ENCODE measurements at regions of chrX and their contacts with region 1.

Region 1: GRCh38 chrX:68196939-68197791 is 236.1 kb downstream of the OPHN1 start:
- DNase-seq: peak in 1 of 5 donors; percentile 7
- ATAC-seq: peak in 3 of 4 donors; percentile 39 to 64 (median 63)
- H3K4me3 ChIP-seq: no peak overlapping the region
- H3K27ac ChIP-seq: no peak overlapping the region
- H3K4me1 ChIP-seq: no peaks in the 10 kb centered on the region
- H3K27me3 ChIP-seq: peaks cover 0 to 7% (median 0%) of the 10 kb centered on the region in 9 donors
- CTCF ChIP-seq: peak; percentile 50 to 70 (median 64)
- POLR2A ChIP-seq: no peak

Region 2: DNA sequence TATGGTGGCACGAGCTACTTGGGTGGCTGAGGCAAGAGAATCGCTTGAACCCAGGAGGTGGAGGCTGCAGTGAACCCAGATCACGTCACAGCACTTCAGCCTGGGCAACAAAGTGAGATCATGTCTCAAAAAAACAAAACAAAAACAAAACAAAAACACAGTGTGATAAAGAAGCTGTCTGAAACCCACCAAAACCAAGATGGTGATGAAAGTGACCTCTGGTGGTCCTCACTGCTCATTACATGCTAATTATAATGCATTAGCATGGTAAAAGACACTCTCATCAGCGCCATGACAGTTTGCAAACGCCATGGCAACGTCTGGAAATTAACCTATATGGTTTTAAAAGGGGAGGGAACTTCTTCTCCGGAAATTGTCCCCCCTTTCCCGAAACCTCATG is 265.5 kb after region 1 on chrX:
- intact Hi-C with region 1: loop called (anchors 1 to 5 kb)
- DNase-seq: peak in 1 of 5 donors; percentile 18
- ATAC-seq: peak in 1 of 4 donors; percentile 54
- H3K4me3 ChIP-seq: no peak overlapping the region
- H3K27ac ChIP-seq: no peak overlapping the region
- H3K4me1 ChIP-seq: peaks cover 0 to 3% (median 0%) of the 10 kb centered on the region in 12 donors
- H3K27me3 ChIP-seq: peaks cover 0 to 5% (median 0%) of the 10 kb centered on the region in 9 donors
- CTCF ChIP-seq: peak; percentile 42 to 66 (median 58)
- POLR2A ChIP-seq: no peak

Measured in heart left ventricle (tissue), 16 donors.